ENCODE measurements at regions of chr10 and their contacts with region 1.

Region 1: GRCh38 chr10:76547352-76547972 is 1090.1 kb downstream of the KCNMA1 start:
- DNase-seq: peak; percentile 72
- H3K4me3 ChIP-seq: no peak overlapping the region
- H3K27ac ChIP-seq: no peak overlapping the region
- H3K4me1 ChIP-seq: peaks cover 19% of the 10 kb centered on the region
- H3K27me3 ChIP-seq: no peaks in the 10 kb centered on the region
- CTCF ChIP-seq: peak; percentile 56 to 72
- POLR2A ChIP-seq: no peak

Region 2: GRCh38 chr10:75922435-75922834 is 625.0 kb before region 1 on chr10:
- CTCF ChIA-PET with region 1: interaction called, 3 read pairs
- POLR2A ChIA-PET with region 1: no interaction called
- dilution Hi-C with region 1: no loop called
- intact Hi-C with region 1: loop called (anchors 10 kb)
- DNase-seq: no peak
- H3K4me3 ChIP-seq: no peak overlapping the region
- H3K27ac ChIP-seq: no peak overlapping the region
- H3K4me1 ChIP-seq: no peaks in the 10 kb centered on the region
- H3K27me3 ChIP-seq: no peaks in the 10 kb centered on the region
- CTCF ChIP-seq: no peak
- POLR2A ChIP-seq: no peak

Region 3: GRCh38 chr10:76106611-76107010 is 440.9 kb before region 1 on chr10:
- CTCF ChIA-PET with region 1: interaction called, 3 read pairs
- POLR2A ChIA-PET with region 1: no interaction called
- dilution Hi-C with region 1: no loop called
- intact Hi-C with region 1: loop called (anchors 1 kb)
- DNase-seq: no peak
- H3K4me3 ChIP-seq: no peak overlapping the region
- H3K27ac ChIP-seq: no peak overlapping the region
- H3K4me1 ChIP-seq: no peaks in the 10 kb centered on the region
- H3K27me3 ChIP-seq: no peaks in the 10 kb centered on the region
- CTCF ChIP-seq: no peak
- POLR2A ChIP-seq: no peak

Region 4: DNA sequence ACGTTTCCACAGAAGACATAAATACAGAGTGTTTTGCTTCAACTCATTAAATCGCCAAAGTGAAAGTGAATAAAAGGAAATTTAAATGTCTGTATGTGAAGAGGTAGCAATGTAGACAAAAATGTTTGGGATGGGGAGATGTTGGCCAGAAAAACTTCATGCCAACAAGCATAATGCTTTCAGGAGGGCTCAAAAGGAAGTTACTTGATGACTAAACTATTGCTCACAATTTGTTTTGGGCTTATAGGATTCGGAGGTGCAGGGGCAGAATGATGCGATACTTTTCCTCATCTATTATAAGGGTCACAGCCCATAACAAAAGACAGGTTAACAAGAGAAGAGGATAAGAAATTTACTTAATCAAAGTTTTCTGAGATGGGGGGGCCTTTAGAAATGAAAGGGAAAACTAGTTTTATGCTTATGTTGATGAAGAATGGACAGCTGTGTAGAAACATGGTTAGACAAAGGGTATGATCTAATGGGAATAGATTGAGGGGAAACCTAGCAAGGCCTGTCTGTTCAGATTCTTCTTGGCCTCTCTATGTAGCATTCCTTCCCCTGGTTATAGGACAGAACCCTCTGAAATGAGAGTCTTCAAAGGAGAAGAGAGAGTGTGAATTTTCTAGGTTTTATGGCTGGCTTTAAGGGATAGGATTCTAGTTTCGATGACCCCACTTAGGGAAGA is 217.4 kb before region 1 on chr10:
- CTCF ChIA-PET with region 1: no interaction called
- POLR2A ChIA-PET with region 1: no interaction called
- dilution Hi-C with region 1: no loop called
- intact Hi-C with region 1: loop called (anchors 5 kb)
- DNase-seq: peak; percentile 57
- H3K4me3 ChIP-seq: peak overlapping the region in 1 of 3 experiments; percentile 38
- H3K27ac ChIP-seq: peak overlapping the region; percentile 60
- H3K4me1 ChIP-seq: peaks cover 12% of the 10 kb centered on the region
- H3K27me3 ChIP-seq: no peaks in the 10 kb centered on the region
- CTCF ChIP-seq: no peak
- POLR2A ChIP-seq: no peak

Region 5: GRCh38 chr10:76984559-76985443 is 437.3 kb after region 1 on chr10:
- CTCF ChIA-PET with region 1: interaction called, 3 read pairs
- POLR2A ChIA-PET with region 1: no interaction called
- dilution Hi-C with region 1: no loop called
- intact Hi-C with region 1: loop called (anchors 1 kb)
- DNase-seq: peak; percentile 68
- H3K4me3 ChIP-seq: no peak overlapping the region
- H3K27ac ChIP-seq: no peak overlapping the region
- H3K4me1 ChIP-seq: no peaks in the 10 kb centered on the region
- H3K27me3 ChIP-seq: no peaks in the 10 kb centered on the region
- CTCF ChIP-seq: peak; percentile 88 to 89
- POLR2A ChIP-seq: no peak

Measured in endothelial cell of umbilical vein (primary cell).